Right ventricle myocardium inferior (tissue), 1 donor: ENCODE measurements at regions of chr1 and their contacts with region 1.

Region 1: GRCh38 chr1:28552758-28553663 is at the start of gene TRNAU1AP:
- DNase-seq: peak; percentile 98
- ATAC-seq: peak; percentile 99
- total RNA-seq, gene TRNAU1AP: 15.9 TPM

Region 2: DNA sequence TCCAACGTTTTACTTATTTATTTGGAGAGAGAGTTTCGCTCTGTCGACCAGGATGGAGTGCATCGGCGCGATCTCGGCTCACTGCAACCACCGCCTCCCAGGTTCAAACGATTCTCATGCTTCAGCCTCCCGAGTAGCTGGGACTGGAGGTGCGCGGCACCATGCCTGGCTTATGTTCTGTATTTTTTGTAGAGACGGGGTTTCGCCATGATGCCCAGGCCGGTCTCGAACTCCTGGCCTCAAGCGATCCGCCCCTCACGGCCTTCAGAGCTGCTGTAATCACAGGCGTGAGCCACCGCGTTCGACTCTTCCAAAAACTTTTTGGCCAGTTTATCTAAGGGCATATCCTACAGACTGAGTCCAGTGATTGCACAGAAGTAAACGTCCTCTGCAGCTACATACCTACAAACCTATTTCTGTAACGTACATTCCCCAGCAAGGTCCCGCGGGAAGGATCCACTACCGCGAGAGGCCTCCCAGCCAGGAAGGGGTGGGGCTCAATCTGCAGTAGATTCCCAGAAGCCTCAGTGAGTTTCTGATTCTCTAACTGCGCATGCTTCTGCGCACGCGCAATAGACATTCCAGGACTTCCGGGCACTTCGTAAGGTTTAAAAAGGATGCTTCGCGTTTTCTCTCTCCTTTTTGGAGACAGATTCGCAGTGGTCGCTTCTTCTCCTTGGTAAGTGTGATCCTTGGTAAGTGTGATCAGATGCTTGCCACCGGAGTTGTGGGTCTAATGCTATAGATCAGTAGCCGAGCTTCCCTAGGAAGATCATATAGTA is 47.4 kb before region 1 on chr1 and contains the start of gene RCC1:
- intact Hi-C with region 1: loop called (anchors 1 kb)
- DNase-seq: peak; percentile 97
- ATAC-seq: peak; percentile 99
- total RNA-seq, gene RCC1: 8.5 TPM

Region 3: DNA sequence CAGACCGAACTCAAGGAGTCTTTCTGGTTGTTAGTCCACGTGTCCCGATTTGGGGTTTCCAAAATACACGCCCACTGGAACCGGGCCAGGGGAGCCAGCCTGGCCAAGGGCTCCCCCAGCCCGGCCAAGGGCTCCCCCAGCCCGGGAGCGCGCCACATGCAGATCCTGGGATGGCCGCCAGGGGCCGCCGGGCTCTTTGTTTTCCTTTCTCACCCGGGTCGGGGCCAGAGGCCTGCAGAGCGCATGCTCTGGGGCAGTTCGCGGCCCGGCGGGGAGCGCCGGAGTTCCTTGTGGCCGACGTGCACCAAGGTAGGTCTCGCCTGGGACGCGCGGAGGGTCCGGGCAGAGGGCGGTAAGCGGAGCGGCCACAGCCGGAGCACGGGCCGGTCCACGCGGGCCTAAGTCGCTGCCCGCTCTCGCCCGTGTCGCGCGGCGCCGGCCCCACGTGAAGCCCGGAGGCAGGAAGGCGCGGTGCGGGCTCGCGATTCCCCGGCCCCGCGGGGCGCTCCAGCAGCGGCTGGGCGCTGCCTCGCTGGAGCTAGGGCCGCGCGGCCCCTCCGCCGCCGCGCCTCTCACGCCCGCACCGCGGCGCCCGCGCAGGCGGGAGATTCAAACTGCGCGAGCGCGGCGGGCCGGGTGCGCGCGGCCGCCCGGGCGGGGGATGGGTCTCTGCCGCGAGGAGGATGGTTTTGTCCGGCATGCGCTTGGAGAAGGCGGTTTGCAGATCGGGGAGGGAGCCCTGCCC is 34.8 kb before region 1 on chr1:
- intact Hi-C with region 1: loop called (anchors 2 kb)
- DNase-seq: peak; percentile 97
- ATAC-seq: peak; percentile 95

Region 4: DNA sequence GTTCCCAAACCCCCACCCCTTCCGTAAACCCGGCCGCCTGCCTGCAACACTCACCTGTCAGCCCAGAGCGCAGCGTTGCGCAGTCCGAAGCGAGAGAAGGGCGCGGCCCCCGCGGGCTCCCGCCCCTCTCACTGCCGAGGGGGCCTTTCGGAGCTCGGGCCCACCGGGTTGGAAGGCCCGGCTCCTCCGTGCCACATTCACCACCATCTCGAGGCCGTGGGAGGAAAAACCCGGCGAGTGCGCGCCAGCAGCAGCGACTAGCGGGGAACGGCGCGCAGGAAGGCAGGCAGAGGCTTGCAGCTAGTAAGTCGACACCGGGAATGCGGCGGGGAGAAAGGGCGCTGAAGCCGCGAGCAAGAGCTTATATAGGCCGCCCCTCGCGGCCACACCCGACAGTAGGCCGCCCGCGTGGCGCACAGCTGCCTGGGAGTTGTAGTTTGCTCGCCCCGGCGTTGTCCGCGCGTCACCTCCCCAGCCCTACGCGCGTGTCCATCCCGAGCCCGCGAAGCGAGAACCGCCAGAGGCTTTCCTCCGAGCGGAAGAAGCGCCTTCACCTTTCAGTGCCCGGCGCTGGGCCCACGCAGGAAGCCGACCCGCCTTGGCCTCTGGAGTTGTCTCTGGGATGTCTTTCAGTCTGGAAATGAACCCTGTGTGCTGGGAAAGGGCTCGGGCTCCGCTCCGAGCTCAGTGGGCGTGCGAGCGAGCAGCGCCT is 28.7 kb after region 1 on chr1:
- intact Hi-C with region 1: loop called (anchors 2 kb)
- DNase-seq: peak; percentile 99
- ATAC-seq: peak; percentile 99

Region 5: DNA sequence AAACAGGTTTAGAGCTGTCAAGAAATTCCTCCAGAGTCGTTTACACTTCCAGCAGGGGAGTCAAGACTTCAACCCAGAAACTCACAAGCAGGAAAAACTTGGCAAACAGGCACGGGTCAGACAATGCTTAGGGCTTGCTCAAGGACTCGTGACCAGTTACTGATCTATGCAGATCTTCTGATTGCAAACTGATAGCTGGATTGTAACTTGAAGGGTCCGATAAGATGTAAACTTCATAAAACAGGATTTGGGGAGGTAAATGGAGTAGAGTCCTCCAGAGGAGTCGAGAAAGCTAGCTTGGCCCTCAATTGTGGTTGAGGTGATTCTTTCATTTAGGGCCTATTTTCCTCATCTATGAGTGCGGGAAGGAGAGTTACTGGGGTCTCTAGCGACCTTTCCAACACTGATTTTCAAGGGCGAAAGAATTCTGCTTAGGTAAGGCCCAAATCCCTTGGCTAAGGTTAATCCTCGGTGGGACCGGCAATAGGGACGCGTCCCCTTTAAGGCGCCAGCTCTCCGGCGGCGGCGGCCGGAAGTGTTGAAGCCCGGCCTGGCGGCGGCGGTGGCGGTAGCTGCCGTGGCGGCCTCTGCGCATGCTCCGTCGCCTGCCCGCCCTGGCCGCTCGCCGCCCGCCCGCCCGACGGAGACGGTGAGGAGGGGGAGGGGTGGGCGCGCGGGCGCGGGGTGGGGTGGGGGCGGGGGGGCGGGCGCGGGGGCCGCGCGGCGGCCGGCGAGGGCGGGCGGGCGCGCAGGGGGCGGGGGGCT is 115.4 kb after region 1 on chr1 and contains the start of gene GMEB1:
- intact Hi-C with region 1: no loop called
- DNase-seq: peak; percentile 95
- ATAC-seq: peak; percentile 89
- total RNA-seq, gene GMEB1: 6.5 TPM